Posterior vena cava (tissue), 2 donors: ENCODE measurements at regions of chr5 and their contacts with region 1.

Region 1: DNA sequence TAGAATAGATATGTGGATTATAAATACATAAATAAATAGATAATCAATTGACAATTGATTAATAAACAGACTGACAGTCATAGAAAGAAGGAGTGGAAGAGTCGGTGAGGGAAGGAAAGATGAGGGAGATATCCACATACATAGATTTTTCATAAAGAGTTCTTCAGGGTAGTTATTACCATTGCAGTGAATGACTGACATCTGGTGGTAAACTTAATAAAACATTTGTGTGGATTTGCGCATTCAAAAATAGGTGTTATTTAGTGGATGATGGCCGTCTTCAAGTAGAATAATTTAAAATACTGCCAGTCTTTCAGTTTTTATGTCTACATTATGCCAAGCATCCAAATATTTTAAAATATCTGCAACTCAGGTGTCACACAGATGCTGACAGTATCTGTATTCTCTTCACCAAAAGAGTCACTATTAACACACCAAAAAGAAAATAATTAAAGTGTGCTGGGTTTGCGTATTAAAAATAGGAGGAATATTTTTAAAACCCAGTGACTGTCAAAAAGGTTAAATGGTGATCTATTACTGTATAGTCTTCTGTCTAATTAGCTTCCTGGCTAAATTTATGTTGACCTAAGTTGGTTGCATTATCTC is 78.8 kb downstream of the GIN1 start:
- DNase-seq: no peak

Region 2: GRCh38 chr5:102583276-102584124 is 457.7 kb before region 1 on chr5:
- intact Hi-C with region 1: loop called in 1 of 2 experiments (anchors 10 kb)
- DNase-seq: no peak

Region 3: DNA sequence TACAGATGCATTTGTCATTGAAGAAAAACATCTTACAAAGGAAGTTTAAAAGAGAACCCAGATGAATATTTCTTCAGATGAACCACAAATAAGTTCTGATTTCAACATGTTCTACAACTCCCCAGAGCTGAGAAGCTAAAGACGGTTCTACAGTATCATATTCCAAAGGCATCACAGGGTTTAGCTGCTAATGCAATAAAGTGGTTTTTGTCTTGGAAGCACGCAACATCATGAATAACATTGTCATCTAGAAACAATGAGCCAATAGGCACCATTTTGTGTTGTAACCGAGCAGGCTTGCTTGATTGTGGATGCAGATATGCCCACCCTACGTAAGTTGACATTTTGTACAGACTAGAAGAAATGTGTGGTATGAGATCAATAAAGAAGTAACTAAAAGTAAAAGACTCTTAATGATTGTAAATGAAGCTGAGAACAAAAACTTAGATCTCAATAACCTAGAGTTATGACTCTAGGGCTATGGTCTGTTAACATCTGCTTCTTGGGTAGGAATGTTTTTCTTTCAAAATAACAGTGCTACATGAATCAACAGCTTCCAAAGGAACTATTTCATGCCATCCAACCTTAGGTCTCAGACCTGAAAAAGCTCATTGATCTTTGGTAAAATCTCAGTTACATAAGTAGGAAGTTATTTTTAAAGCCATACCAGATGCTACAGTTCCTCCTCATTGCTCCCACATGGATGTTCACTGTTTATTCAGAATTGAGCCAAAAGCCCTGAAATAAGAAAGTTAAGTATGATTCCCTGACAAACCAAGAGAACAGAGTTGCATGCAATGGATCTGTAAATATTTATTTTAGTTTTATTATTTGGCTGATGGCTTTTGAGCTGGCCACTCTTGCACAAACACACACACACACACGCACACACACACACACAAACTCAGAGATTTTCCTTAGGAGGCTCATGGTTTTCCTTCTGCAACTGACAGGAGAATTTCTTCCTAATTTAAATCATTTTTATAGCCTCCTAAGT is 423.7 kb before region 1 on chr5:
- intact Hi-C with region 1: no loop called
- DNase-seq: no peak

Region 4: DNA sequence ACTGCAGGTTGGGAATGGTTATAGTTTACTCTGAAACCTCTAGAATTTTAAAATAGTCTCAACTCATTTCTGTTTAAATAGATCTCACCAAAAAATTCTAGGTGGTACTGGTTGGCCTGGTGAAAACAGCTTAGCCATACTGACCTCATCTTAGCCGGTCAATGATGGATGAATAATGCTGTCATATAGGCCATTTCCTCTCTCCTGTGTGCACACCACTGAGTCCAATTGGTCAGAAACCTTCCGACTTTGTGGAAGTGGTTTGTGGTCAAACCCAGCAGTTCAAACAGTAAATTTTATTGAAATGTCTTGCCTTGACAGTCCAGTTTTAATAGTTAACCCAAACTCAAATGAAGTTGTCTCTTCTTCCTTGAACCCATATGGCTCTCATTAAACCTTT is 19.9 kb before region 1 on chr5:
- intact Hi-C with region 1: no loop called
- DNase-seq: no peak